ENCODE measurements at regions of chr19 and their contacts with region 1.

Region 1: DNA sequence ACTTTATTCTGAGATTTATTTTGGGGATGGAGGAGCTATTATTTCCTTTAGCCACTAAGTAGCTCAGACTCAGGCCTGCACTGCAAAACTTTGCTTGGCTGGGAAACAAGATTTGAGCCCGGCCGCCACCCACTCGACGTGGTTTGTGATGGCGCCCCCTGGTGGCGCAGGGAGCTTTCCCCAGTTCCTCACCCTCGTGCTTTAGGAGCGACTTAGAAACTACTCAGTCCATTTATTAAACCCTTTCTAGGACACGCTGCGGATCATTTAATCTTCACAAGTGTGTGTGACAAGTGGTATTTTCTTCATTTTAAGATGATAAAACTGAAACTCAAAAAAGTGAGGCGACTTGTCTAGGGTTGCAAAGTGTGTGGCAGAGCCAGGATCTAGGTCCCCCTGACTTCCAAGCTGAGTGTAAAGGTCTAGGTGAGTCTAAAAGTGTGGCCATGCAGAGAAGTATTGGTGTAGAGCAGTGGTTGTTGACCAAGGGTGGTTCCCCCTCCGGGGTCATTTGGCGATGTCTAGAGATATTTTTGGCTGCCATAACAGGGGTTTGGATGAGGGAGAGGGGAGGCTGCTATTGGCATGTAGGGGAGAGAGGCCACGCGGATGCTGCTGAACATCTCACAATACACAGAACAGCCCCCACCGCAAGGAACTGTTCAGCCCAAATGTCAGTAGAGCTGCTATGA is 2.2 kb downstream of the CXCL17 start:
- H3K4me3 ChIP-seq: no peak overlapping the region
- H3K27ac ChIP-seq: no peak overlapping the region
- H3K4me1 ChIP-seq: peaks cover 10% of the 10 kb centered on the region
- CTCF ChIP-seq: peak; percentile 80

Region 2: DNA sequence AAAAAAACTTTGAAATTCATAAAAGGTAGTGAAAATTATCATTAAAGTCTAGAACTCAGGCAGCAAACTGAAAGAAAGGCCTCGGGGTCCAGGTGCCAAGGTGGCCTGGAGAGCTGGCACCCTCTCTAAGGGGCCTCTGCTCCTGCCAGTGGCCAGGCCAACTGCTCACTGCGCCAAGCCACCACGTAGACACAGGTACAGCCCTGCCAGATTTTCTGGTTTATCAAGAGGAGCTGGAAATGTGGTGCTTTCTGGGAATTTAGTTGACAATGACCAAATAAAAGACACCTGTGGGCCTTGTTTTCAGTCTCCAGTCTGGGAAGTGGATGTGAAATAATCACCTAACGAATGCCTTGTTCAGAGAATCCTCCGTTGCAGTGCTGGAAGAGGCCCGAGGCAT is 341.7 kb before region 1 on chr19:
- CTCF ChIA-PET with region 1: interaction called, 10 read pairs
- POLR2A ChIA-PET with region 1: no interaction called
- H3K4me3 ChIP-seq: no peak overlapping the region
- H3K27ac ChIP-seq: no peak overlapping the region
- H3K4me1 ChIP-seq: no peaks in the 10 kb centered on the region
- CTCF ChIP-seq: no peak

Region 3: DNA sequence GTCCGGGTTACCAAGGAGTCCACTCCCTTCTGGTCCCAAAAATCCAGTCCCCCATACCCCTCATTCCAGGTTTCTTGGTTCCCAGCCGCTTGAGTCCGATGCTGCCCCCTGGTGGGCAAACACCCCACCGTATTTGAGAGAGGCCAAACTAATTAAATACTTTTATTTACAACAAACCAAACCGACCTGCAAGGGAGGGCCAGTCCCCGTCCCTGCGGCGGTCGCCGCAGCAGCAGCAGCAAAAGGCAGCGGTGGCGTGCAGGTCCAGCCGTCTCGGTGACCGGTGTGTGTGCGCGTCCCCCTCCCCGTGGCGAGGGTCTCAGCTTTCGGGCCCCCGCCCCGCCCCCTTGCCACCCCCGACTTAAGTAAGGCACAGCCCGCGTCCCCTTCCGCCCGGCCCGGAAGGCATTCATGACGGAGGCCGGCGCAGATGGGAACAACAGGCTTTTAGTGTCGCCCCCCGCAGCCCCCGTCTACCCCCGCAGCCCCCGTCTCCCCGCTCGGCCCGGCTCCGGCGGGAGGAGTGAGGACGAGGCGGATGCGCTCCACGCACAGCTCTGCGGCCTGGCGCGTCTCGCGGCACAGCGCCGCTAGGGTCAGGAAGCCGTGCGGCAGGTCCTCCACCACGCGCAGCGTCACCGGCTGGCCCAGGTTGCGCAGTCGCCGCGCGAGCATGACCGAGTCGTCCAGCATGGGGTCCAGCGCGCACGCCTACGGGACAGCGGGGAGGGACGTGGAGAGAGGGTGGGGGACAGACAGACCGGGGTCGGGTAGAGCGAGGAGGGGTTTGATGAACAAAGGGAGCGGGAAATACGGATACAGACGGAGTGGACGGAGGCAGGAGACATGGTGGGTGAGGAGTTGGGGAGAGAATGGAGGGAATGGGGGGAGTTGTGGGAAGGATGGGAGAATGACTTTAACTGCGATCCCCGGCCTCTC is 38.9 kb before region 1 on chr19:
- CTCF ChIA-PET with region 1: interaction called, 13 read pairs
- POLR2A ChIA-PET with region 1: interaction called, 7 read pairs
- H3K4me3 ChIP-seq: peak overlapping the region; percentile 49
- H3K27ac ChIP-seq: peak overlapping the region; percentile 50; the same call in 1 of the 2 replicates
- H3K4me1 ChIP-seq: peaks cover 12% of the 10 kb centered on the region
- CTCF ChIP-seq: peak; percentile 76

Region 4: DNA sequence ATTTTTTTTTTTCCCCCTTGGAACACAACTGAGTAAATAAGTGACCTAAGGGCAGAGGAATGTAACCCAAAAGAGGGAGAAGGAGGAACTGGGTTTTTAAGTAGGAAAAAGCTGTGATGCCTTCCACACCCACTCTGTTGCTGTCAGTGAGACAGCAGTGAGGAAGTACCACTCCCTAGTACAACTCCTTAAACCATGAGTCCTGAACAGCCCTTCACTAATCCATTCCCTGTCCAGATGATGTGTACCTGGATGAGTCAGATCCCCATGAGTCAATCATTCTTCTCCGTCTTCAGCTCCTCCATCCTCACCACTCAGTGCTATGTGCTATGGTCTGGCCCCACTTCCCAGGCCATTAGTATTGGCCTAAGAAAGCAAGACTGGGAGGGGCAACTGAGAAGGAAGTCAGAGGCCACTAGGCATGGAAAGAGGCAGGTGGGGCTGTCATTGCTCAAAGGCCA is 15.1 kb after region 1 on chr19:
- CTCF ChIA-PET with region 1: interaction called, 91 read pairs
- POLR2A ChIA-PET with region 1: interaction called, 6 read pairs
- H3K4me3 ChIP-seq: no peak overlapping the region
- H3K27ac ChIP-seq: no peak overlapping the region
- H3K4me1 ChIP-seq: peaks cover 3% of the 10 kb centered on the region; the same call in 1 of the 2 replicates
- CTCF ChIP-seq: no peak

Region 5: DNA sequence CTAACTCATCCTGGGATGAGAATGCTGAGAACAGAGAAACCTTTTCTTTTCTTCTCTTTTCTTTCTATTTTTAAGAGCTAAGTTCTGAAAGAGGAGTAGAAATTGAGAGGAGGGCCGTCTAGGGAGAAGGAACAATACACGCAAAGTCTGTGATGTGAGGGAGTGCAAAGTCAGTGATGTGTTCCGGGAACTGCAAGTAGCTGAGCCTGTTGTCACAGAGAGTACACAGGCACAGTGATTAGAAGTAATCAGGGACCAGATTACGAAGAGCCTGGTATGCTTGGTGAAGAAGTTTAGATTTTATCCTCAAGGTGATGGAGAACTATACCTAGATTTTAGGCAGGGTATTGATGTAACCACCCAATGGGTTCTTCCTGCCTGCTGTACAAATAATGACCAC is 34.2 kb after region 1 on chr19:
- CTCF ChIA-PET with region 1: interaction called, 21 read pairs
- POLR2A ChIA-PET with region 1: no interaction called
- H3K4me3 ChIP-seq: no peak overlapping the region
- H3K27ac ChIP-seq: no peak overlapping the region
- H3K4me1 ChIP-seq: peaks cover 12% of the 10 kb centered on the region
- CTCF ChIP-seq: no peak

Region 6: GRCh38 chr19:42519108-42519507 is 78.6 kb after region 1 on chr19:
- CTCF ChIA-PET with region 1: interaction called, 17 read pairs
- POLR2A ChIA-PET with region 1: no interaction called
- H3K4me3 ChIP-seq: no peak overlapping the region
- H3K27ac ChIP-seq: no peak overlapping the region
- H3K4me1 ChIP-seq: no peaks in the 10 kb centered on the region
- CTCF ChIP-seq: no peak

Region 7: GRCh38 chr19:42563352-42564210 is 123.1 kb after region 1 on chr19:
- CTCF ChIA-PET with region 1: interaction called, 14 read pairs
- POLR2A ChIA-PET with region 1: no interaction called
- H3K4me3 ChIP-seq: no peak overlapping the region
- H3K27ac ChIP-seq: no peak overlapping the region
- H3K4me1 ChIP-seq: no peaks in the 10 kb centered on the region
- CTCF ChIP-seq: peak; percentile 69; the same call in 1 of the 2 replicates

Measured in HEK293 (cell line).